WTC11 (cell line): ENCODE measurements at regions of chr17 and their contacts with region 1.

Region 1: DNA sequence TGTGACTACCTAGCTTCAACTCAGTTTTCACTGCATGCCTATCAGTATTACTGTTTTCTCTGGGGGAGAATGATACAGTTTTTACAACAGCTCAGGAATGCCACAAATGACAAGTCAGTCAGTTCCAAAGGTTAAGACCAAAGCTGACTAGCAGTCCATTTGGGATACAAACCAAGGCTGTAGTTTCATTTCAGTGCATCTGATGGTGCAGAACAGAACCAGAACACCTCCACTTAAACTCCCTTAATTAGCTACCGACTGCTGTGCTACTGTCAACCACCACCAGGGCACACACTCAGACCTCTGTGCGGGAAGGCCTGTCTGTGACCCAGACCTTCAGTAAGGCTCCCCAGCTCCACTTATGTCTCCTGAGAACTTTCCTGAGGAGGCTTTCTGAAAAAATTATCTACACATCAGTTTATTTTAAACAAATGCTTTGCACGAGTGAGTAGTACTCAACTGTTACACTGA is 20.4 kb downstream of the NFE2L1 start:
- DNase-seq: peak; percentile 57
- ATAC-seq: peak; percentile 94
- H3K4me3 Mint-ChIP-seq: no peak overlapping the region
- H3K27ac Mint-ChIP-seq: peak overlapping the region; percentile 64
- H3K4me1 Mint-ChIP-seq: peaks cover 6% of the 10 kb centered on the region
- H3K27me3 Mint-ChIP-seq: no peaks in the 10 kb centered on the region
- CTCF ChIP-seq: no peak

Region 2: GRCh38 chr17:48037036-48037837 is 31.3 kb before region 1 on chr17 and contains the start of gene COPZ2:
- CTCF ChIA-PET with region 1: interaction called, 11 read pairs
- POLR2A ChIA-PET with region 1: no interaction called
- DNase-seq: peak; percentile 55
- ATAC-seq: peak; percentile 65
- H3K4me3 Mint-ChIP-seq: peak within 1 kb of the TSS; percentile 79
- H3K27ac Mint-ChIP-seq: no peak within 1 kb of the TSS
- H3K4me1 Mint-ChIP-seq: peaks cover 6% of the 10 kb centered on the region
- H3K27me3 Mint-ChIP-seq: peaks cover 59% of the 10 kb centered on the region
- CTCF ChIP-seq: no peak
- total RNA-seq, gene COPZ2: 0.37 to 0.44 TPM in 2 of 3 replicates, not detected in the other

Region 3: GRCh38 chr17:48047741-48048383 is 20.7 kb before region 1 on chr17 and contains the start of gene NFE2L1:
- CTCF ChIA-PET with region 1: interaction called, 10 read pairs
- POLR2A ChIA-PET with region 1: interaction called, 22 read pairs
- DNase-seq: peak; percentile 99
- ATAC-seq: peak; percentile 95
- H3K4me3 Mint-ChIP-seq: peak within 1 kb of the TSS; percentile 93
- H3K27ac Mint-ChIP-seq: peak within 1 kb of the TSS; percentile 100
- H3K4me1 Mint-ChIP-seq: peaks cover 55% of the 10 kb centered on the region
- H3K27me3 Mint-ChIP-seq: no peaks in the 10 kb centered on the region
- CTCF ChIP-seq: no peak
- total RNA-seq, gene NFE2L1: 130 to 149 TPM (median 131 TPM) in 3 replicates

Region 4: GRCh38 chr17:48054238-48055185 is 14.0 kb before region 1 on chr17:
- CTCF ChIA-PET with region 1: interaction called, 26 read pairs
- POLR2A ChIA-PET with region 1: interaction called, 32 read pairs
- DNase-seq: peak; percentile 96
- ATAC-seq: peak; percentile 91
- H3K4me3 Mint-ChIP-seq: peak overlapping the region; percentile 85
- H3K27ac Mint-ChIP-seq: peak overlapping the region; percentile 99
- H3K4me1 Mint-ChIP-seq: peaks cover 73% of the 10 kb centered on the region
- H3K27me3 Mint-ChIP-seq: no peaks in the 10 kb centered on the region
- CTCF ChIP-seq: no peak

Region 5: DNA sequence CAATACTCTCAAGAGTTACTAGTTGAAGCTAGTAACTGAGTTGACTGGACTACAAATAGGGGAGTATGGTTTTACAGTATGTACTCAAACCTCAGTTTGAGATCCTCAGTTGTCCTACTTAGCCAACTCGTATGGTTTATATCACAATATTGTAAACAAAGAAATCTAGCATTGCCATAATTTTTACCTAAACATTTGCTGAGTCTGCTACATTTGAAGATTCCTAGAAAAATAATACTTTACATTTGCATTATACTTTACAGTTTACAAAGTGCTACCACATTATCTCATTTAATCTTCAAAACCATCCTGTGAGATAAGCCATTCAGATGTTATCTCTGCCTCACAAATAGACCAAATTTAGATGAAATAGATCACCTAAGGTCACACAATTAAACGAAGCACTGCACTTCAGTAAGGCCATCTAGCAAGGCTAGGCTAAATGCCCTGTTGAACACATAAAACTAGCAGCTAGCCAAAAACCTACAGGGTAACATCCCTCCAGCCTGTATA is 16.5 kb after region 1 on chr17:
- CTCF ChIA-PET with region 1: interaction called, 33 read pairs
- POLR2A ChIA-PET with region 1: interaction called, 3 read pairs
- DNase-seq: no peak
- ATAC-seq: no peak
- H3K4me3 Mint-ChIP-seq: no peak overlapping the region
- H3K27ac Mint-ChIP-seq: peak overlapping the region; percentile 53; the same call in 1 of the 2 replicates
- H3K4me1 Mint-ChIP-seq: peaks cover 9% of the 10 kb centered on the region; the same call in 1 of the 2 replicates
- H3K27me3 Mint-ChIP-seq: no peaks in the 10 kb centered on the region
- CTCF ChIP-seq: no peak